Prostate gland (tissue), 2 donors: ENCODE measurements at regions of chr6 and their contacts with region 1.

Region 1: DNA sequence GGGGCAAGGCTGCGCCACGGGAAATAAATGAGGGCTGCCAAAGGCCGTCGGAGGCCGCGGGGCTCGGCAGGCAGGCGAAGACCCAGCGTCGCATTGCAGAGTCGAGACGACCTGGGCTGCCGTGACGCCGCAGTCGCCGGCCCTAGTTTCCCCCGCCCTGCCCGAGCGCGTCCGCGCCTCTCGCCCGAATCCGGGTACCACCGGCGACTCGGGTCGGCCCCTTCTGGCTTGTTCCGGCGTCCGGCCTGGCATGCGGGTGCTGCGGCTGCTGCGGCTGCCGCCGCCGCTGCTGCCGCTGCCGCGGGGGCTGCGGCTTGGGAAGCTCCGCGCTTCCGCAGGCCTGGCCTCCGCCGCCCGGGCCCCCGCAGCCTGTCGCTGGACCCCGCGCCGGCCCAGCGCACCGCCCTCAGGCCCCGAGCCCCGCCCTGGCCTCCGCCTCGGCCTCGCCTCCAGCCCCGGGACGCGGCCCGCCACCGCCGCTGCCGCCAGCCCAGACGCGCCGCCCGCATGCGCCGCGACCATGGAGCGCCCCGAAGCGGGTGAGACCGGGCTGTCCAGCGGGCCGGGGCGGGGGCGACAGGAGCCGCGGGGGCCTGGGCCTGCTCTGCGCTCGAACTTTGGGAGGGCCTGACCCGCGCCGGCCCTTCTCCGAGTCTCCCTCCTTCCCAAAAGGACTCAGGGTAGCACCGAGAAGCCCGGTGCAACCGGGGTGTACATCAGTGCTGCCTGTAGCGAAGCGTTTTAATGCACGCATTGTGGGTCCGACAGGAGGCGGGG is at the start of gene AKAP7:
- DNase-seq: peak; percentile 53
- H3K4me3 ChIP-seq: peak within 1 kb of the TSS; percentile 65 to 74
- H3K27ac ChIP-seq: peak within 1 kb of the TSS; percentile 87 to 92
- H3K4me1 ChIP-seq: no peaks in the 10 kb centered on the region
- H3K27me3 ChIP-seq: no peaks in the 10 kb centered on the region
- CTCF ChIP-seq: no peak
- POLR2A ChIP-seq: peak; percentile 19
- total RNA-seq, gene AKAP7: 23.7 to 34.3 TPM

Region 2: GRCh38 chr6:131063028-131063763 is 72.2 kb before region 1 on chr6 and contains the start of gene EPB41L2:
- intact Hi-C with region 1: loop called (anchors 2 kb)
- DNase-seq: peak; percentile 75
- H3K4me3 ChIP-seq: peak within 1 kb of the TSS; percentile 55 to 75
- H3K27ac ChIP-seq: peak within 1 kb of the TSS; percentile 63 to 80
- H3K4me1 ChIP-seq: no peaks in the 10 kb centered on the region
- H3K27me3 ChIP-seq: no peaks in the 10 kb centered on the region
- CTCF ChIP-seq: peak in 3 of 4 experiments; percentile 10 to 40 (median 35)
- POLR2A ChIP-seq: peak; percentile 86
- total RNA-seq, gene EPB41L2: 11.9 to 105 TPM